ENCODE measurements at regions of chr2 and their contacts with region 1.

Region 1: DNA sequence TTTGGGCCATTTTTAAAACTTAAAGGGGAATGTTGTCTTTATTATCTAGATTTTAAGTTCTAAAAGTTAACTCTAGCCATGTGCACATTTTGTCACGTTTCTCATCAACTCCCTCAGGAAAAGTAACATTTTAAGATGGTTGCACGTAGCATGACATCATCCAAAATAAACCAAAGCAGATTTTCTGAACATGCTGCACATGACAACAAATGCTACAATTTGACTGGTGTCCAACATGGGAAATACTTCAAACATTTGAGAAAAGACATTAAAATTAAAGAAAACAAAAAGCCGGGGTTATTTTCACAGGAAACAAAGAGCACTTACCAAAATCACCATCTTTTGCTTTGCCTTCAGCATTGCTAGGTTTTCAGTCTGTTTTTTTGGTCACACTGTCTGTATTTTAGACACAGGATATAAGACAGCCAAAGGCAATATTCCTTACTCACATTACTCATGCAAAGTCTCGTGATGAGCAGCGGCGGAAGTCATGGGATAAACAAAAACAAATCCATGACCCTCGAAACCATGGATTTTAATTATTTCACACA is 51.3 kb upstream of the RND3 start:
- DNase-seq: no peak
- H3K4me3 ChIP-seq: no peak overlapping the region
- H3K27ac ChIP-seq: peak overlapping the region; percentile 40 to 61
- H3K4me1 ChIP-seq: no peaks in the 10 kb centered on the region
- H3K27me3 ChIP-seq: no peaks in the 10 kb centered on the region
- CTCF ChIP-seq: no peak
- POLR2A ChIP-seq: no peak

Region 2: DNA sequence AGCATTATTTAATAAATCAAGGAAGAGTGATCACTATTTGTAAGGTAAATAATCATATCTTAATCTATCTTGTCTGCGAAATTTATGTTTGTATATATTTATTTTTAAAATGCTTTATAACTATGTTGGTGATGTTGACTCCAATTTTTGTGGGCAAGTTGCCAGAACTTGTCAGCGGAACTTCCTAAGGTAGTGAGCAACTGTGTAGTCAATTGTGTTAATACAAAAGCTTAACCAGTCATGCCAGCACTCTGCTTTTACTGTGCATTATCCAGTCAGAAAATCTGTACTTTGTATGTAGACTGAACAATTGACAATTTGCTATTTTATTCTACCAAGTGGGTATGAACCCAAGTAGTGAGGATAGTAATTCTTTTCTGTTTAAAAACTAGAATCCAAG is 10.7 kb after region 1 on chr2:
- intact Hi-C with region 1: loop called (anchors 1 kb)
- DNase-seq: no peak
- H3K4me3 ChIP-seq: no peak overlapping the region
- H3K27ac ChIP-seq: no peak overlapping the region
- H3K4me1 ChIP-seq: no peaks in the 10 kb centered on the region
- H3K27me3 ChIP-seq: no peaks in the 10 kb centered on the region
- CTCF ChIP-seq: no peak
- POLR2A ChIP-seq: no peak

Region 3: GRCh38 chr2:150561076-150561475 is 22.4 kb after region 1 on chr2:
- intact Hi-C with region 1: no loop called
- DNase-seq: no peak
- H3K4me3 ChIP-seq: no peak overlapping the region
- H3K27ac ChIP-seq: no peak overlapping the region
- H3K4me1 ChIP-seq: no peaks in the 10 kb centered on the region
- H3K27me3 ChIP-seq: no peaks in the 10 kb centered on the region
- CTCF ChIP-seq: no peak
- POLR2A ChIP-seq: no peak

Region 4: GRCh38 chr2:150806336-150806735 is 267.6 kb after region 1 on chr2:
- intact Hi-C with region 1: no loop called
- DNase-seq: no peak
- H3K4me3 ChIP-seq: no peak overlapping the region
- H3K27ac ChIP-seq: no peak overlapping the region
- H3K4me1 ChIP-seq: no peaks in the 10 kb centered on the region
- H3K27me3 ChIP-seq: no peaks in the 10 kb centered on the region
- CTCF ChIP-seq: no peak
- POLR2A ChIP-seq: no peak

Measured in breast epithelium (tissue), 4 donors.